CD8-positive, alpha-beta T cell (primary cell): ENCODE measurements at regions of chr10 and their contacts with region 1.

Region 1: GRCh38 chr10:37619336-37619735 is 238.1 kb downstream of the ZNF248 start:
- DNase-seq: no peak
- ATAC-seq: no peak
- H3K4me3 ChIP-seq: no peak overlapping the region
- H3K4me3 Mint-ChIP-seq: no peak overlapping the region
- H3K27ac ChIP-seq: no peak overlapping the region
- H3K27ac Mint-ChIP-seq: no peak overlapping the region
- H3K4me1 ChIP-seq: no peaks in the 10 kb centered on the region
- H3K4me1 Mint-ChIP-seq: no peaks in the 10 kb centered on the region
- H3K27me3 ChIP-seq: no peaks in the 10 kb centered on the region
- H3K27me3 Mint-ChIP-seq: no peaks in the 10 kb centered on the region
- CTCF ChIP-seq: no peak

Region 2: GRCh38 chr10:37146443-37146842 is 472.9 kb before region 1 on chr10:
- CTCF ChIA-PET with region 1: no interaction called
- POLR2A ChIA-PET with region 1: no interaction called
- intact Hi-C with region 1: no loop called
- DNase-seq: no peak
- ATAC-seq: no peak
- H3K4me3 ChIP-seq: no peak overlapping the region
- H3K4me3 Mint-ChIP-seq: no peak overlapping the region
- H3K27ac ChIP-seq: no peak overlapping the region
- H3K27ac Mint-ChIP-seq: no peak overlapping the region
- H3K4me1 ChIP-seq: no peaks in the 10 kb centered on the region
- H3K4me1 Mint-ChIP-seq: no peaks in the 10 kb centered on the region
- H3K27me3 ChIP-seq: no peaks in the 10 kb centered on the region
- H3K27me3 Mint-ChIP-seq: no peaks in the 10 kb centered on the region
- CTCF ChIP-seq: no peak

Region 3: GRCh38 chr10:37434091-37434490 is 185.2 kb before region 1 on chr10:
- CTCF ChIA-PET with region 1: no interaction called
- POLR2A ChIA-PET with region 1: no interaction called
- intact Hi-C with region 1: no loop called
- DNase-seq: no peak
- ATAC-seq: no peak
- H3K4me3 ChIP-seq: no peak overlapping the region
- H3K4me3 Mint-ChIP-seq: no peak overlapping the region
- H3K27ac ChIP-seq: no peak overlapping the region
- H3K27ac Mint-ChIP-seq: no peak overlapping the region
- H3K4me1 ChIP-seq: no peaks in the 10 kb centered on the region
- H3K4me1 Mint-ChIP-seq: no peaks in the 10 kb centered on the region
- H3K27me3 ChIP-seq: no peaks in the 10 kb centered on the region
- H3K27me3 Mint-ChIP-seq: no peaks in the 10 kb centered on the region
- CTCF ChIP-seq: no peak

Region 4: DNA sequence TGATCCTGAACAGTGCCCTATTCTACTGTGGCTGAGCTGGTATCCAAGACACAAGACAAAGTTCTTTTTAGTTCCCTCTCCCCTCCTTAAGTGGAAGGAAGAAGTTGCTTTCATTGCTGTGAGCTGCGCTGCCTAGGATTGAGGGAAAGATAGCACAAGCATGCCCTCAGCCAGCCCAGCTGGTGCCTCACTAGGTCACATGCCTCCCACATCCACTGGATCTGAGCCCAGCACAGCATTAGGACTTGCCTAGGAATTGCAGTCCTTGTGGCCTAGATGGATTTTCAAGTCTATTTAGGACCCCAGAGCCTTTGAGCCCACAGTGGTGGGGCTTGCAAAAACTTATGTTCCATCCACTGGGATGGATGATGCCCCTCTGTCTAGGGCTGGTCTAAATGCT is 23.9 kb after region 1 on chr10:
- CTCF ChIA-PET with region 1: no interaction called
- POLR2A ChIA-PET with region 1: no interaction called
- intact Hi-C with region 1: loop called in 1 of 2 experiments (anchors 2 kb)
- DNase-seq: no peak
- ATAC-seq: no peak
- H3K4me3 ChIP-seq: no peak overlapping the region
- H3K4me3 Mint-ChIP-seq: no peak overlapping the region
- H3K27ac ChIP-seq: no peak overlapping the region
- H3K27ac Mint-ChIP-seq: no peak overlapping the region
- H3K4me1 ChIP-seq: no peaks in the 10 kb centered on the region
- H3K4me1 Mint-ChIP-seq: no peaks in the 10 kb centered on the region
- H3K27me3 ChIP-seq: no peaks in the 10 kb centered on the region
- H3K27me3 Mint-ChIP-seq: no peaks in the 10 kb centered on the region
- CTCF ChIP-seq: no peak

Region 5: GRCh38 chr10:37765216-37765615 is 145.9 kb after region 1 on chr10:
- CTCF ChIA-PET with region 1: no interaction called
- POLR2A ChIA-PET with region 1: no interaction called
- intact Hi-C with region 1: no loop called
- DNase-seq: no peak
- ATAC-seq: no peak
- H3K4me3 ChIP-seq: no peak overlapping the region
- H3K4me3 Mint-ChIP-seq: no peak overlapping the region
- H3K27ac ChIP-seq: no peak overlapping the region
- H3K27ac Mint-ChIP-seq: no peak overlapping the region
- H3K4me1 ChIP-seq: no peaks in the 10 kb centered on the region
- H3K4me1 Mint-ChIP-seq: no peaks in the 10 kb centered on the region
- H3K27me3 ChIP-seq: no peaks in the 10 kb centered on the region
- H3K27me3 Mint-ChIP-seq: no peaks in the 10 kb centered on the region
- CTCF ChIP-seq: no peak